Pancreas (tissue), 10 donors: ENCODE measurements at regions of chr1 and their contacts with region 1.

Region 1: DNA sequence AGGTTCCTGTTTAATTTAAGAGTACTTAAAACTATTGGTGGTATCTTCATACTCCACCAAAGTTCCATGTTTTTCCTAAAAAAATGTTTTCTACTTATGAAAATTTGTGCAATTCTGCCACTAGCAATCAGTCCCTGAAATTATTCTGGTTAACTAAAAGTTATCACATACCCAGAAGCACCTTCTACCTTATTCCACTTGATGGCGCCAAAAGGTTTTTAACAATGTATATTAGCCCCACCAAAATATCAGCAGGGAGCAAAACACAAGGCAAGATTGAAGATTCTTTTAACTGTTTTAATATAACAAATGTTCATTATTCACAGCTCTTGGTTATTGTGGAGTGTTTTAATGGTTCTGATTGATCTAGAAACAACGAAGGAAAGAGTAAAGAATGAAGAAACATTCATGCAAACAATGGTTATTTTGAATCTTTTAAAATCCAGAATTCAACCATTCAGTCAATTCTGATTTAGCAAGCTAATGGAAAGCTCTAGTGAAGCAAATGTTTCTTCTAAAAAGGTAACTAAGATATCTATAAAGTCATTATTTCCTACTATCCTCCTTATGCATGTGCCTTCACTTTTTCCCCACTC is 67.2 kb downstream of the TTLL7 start:
- DNase-seq: peak in 1 of 6 donors; percentile 20
- ATAC-seq: peak; percentile 67 to 89 (median 86)
- H3K4me3 ChIP-seq: no peak overlapping the region
- H3K27ac ChIP-seq: no peak overlapping the region
- H3K4me1 ChIP-seq: peaks cover 0 to 14% (median 0%) of the 10 kb centered on the region in 3 donors
- H3K27me3 ChIP-seq: no peaks in the 10 kb centered on the region
- CTCF ChIP-seq: peak in 2 of 4 donors; percentile 51 to 59

Region 2: GRCh38 chr1:84077476-84078107 is 145.8 kb after region 1 on chr1:
- intact Hi-C with region 1: no loop called
- DNase-seq: peak; percentile 63 to 88 (median 74)
- ATAC-seq: peak; percentile 96 to 98 (median 98)
- H3K4me3 ChIP-seq: peak overlapping the region; percentile 81 to 88 (median 84)
- H3K27ac ChIP-seq: peak overlapping the region; percentile 66 to 89 (median 86)
- H3K4me1 ChIP-seq: no peaks in the 10 kb centered on the region
- H3K27me3 ChIP-seq: no peaks in the 10 kb centered on the region
- CTCF ChIP-seq: no peak

Region 3: GRCh38 chr1:84122780-84123382 is 191.1 kb after region 1 on chr1:
- intact Hi-C with region 1: loop called in 2 of 3 experiments (anchors 5 to 10 kb)
- DNase-seq: peak in 3 of 6 donors; percentile 15 to 51 (median 25)
- ATAC-seq: peak; percentile 58 to 88 (median 84)
- H3K4me3 ChIP-seq: no peak overlapping the region
- H3K27ac ChIP-seq: no peak overlapping the region
- H3K4me1 ChIP-seq: no peaks in the 10 kb centered on the region
- H3K27me3 ChIP-seq: no peaks in the 10 kb centered on the region
- CTCF ChIP-seq: peak in 3 of 4 donors; percentile 49 to 52 (median 50)